ENCODE measurements at regions of chr5 and their contacts with region 1.

Region 1: GRCh38 chr5:130720355-130720754 is 444.7 kb downstream of the HINT1 start:
- DNase-seq: no peak
- ATAC-seq: no peak
- H3K4me3 ChIP-seq: no peak overlapping the region
- H3K4me3 Mint-ChIP-seq: no peak overlapping the region
- H3K27ac ChIP-seq: no peak overlapping the region
- H3K27ac Mint-ChIP-seq: no peak overlapping the region
- H3K4me1 ChIP-seq: no peaks in the 10 kb centered on the region
- H3K4me1 Mint-ChIP-seq: no peaks in the 10 kb centered on the region
- H3K27me3 ChIP-seq: no peaks in the 10 kb centered on the region
- H3K27me3 Mint-ChIP-seq: peaks cover 34% of the 10 kb centered on the region
- CTCF ChIP-seq: no peak

Region 2: DNA sequence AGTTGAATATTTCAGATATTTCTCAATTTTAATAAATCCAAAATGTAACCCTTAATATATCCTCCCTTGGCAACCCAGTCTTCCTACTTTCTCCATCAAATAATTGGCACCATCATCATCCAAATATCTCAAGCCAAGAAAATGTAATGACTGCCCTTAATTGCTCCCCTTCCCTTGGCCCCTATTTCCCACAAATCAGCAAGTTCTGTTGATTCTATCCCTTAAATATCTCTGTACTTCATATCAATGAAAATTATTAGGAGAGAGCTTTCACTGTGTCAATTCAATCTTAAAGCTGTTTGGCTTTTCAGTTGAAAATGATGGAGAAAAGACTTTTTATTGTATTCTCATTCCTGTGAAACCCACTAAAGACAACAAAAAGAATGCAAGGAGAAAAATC is 94.9 kb after region 1 on chr5:
- CTCF ChIA-PET with region 1: no interaction called
- POLR2A ChIA-PET with region 1: no interaction called
- intact Hi-C with region 1: loop called in 1 of 2 experiments (anchors 1 kb)
- DNase-seq: no peak
- ATAC-seq: no peak
- H3K4me3 ChIP-seq: no peak overlapping the region
- H3K4me3 Mint-ChIP-seq: no peak overlapping the region
- H3K27ac ChIP-seq: no peak overlapping the region
- H3K27ac Mint-ChIP-seq: no peak overlapping the region
- H3K4me1 ChIP-seq: no peaks in the 10 kb centered on the region
- H3K4me1 Mint-ChIP-seq: peaks cover 10% of the 10 kb centered on the region
- H3K27me3 ChIP-seq: no peaks in the 10 kb centered on the region
- H3K27me3 Mint-ChIP-seq: no peaks in the 10 kb centered on the region
- CTCF ChIP-seq: no peak

Measured in CD8-positive, alpha-beta T cell (primary cell).